Ascending aorta (tissue), 2 donors: ENCODE measurements at regions of chr3 and their contacts with region 1.

Region 1: GRCh38 chr3:105729667-105730066 is 139.1 kb downstream of the CBLB start:
- DNase-seq: no peak
- H3K4me3 ChIP-seq: no peak overlapping the region
- H3K27ac ChIP-seq: peak overlapping the region in 1 of 2 donors; percentile 18
- H3K4me1 ChIP-seq: peaks cover 0 to 15% of the 10 kb centered on the region in 2 donors
- H3K27me3 ChIP-seq: no peaks in the 10 kb centered on the region
- CTCF ChIP-seq: no peak

Region 2: GRCh38 chr3:105700575-105700974 is 29.1 kb before region 1 on chr3:
- intact Hi-C with region 1: no loop called
- DNase-seq: no peak
- H3K4me3 ChIP-seq: no peak overlapping the region
- H3K27ac ChIP-seq: no peak overlapping the region
- H3K4me1 ChIP-seq: no peaks in the 10 kb centered on the region
- H3K27me3 ChIP-seq: no peaks in the 10 kb centered on the region
- CTCF ChIP-seq: no peak

Region 3: DNA sequence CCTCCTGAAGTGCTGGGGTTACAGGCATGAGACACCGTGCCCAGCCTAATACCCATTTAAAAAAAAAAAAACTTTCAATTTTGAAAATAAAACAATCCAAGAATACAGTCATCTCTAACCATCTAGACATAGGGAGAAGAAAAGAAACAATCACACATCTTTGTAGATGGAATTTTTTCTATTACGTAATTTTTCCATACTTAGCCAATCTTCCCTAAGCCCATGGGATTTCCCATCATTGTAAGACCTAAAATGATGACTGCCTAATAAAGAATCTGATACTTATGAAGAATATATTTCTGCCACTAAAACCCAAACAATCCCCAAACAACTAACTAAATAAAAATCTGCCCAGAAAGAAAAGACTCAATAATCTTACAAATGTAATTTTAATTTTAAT is 50.4 kb after region 1 on chr3:
- intact Hi-C with region 1: loop called (anchors 10 kb)
- DNase-seq: no peak
- H3K4me3 ChIP-seq: no peak overlapping the region
- H3K27ac ChIP-seq: no peak overlapping the region
- H3K4me1 ChIP-seq: no peaks in the 10 kb centered on the region
- H3K27me3 ChIP-seq: no peaks in the 10 kb centered on the region
- CTCF ChIP-seq: no peak